ENCODE measurements at regions of chr13 and their contacts with region 1.

Region 1: DNA sequence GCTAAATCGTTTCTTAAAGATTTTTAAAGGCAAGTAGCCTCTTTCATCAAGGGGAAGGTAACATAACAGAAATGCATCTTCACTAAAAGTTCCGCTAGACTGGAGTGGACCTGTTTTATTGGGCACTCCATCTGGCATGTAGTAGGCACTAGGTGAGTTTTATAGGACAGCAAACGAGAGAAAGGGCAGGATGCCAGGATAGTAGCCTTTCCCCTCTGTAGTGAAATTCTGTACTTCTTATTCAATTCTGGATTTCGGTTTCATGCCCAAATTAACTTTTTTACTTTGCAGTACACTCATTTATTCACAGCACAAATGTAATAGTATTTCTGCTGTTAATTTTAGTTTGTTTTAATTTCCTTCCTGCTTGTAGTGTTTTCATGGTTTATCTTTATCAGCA is 45.2 kb downstream of the GPR180 start:
- DNase-seq: no peak
- ATAC-seq: no peak
- H3K4me3 Mint-ChIP-seq: no peak overlapping the region
- H3K27ac Mint-ChIP-seq: no peak overlapping the region
- H3K4me1 Mint-ChIP-seq: no peaks in the 10 kb centered on the region
- H3K27me3 Mint-ChIP-seq: no peaks in the 10 kb centered on the region

Region 2: DNA sequence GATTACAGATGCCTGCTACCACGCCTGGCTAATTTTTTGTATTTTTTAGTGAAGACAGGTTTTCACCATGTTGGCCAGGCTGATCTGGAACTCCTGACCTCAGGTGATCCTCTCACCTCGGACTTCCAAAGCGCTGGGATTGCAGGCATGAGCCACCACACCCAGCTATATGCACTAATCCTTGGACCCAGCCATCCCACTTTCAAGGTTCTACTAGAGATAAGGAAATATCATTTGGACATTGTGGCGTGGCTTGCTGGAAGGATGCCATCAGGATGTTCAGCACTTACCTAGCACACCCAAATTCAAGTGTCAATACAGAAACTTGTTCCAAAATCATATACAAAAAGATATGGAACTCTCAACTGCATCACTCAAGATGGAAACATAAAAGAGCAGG is 517.9 kb after region 1 on chr13:
- CTCF ChIA-PET with region 1: no interaction called
- POLR2A ChIA-PET with region 1: no interaction called
- intact Hi-C with region 1: loop called in 1 of 2 experiments (anchors 5 kb)
- DNase-seq: no peak
- ATAC-seq: no peak
- H3K4me3 Mint-ChIP-seq: no peak overlapping the region
- H3K27ac Mint-ChIP-seq: no peak overlapping the region
- H3K4me1 Mint-ChIP-seq: peaks cover 3% of the 10 kb centered on the region
- H3K27me3 Mint-ChIP-seq: no peaks in the 10 kb centered on the region

Measured in activated CD4-positive, alpha-beta T cell treated with anti-CD3 and anti-CD28 coated beads for 36 hours (primary cell).